ENCODE measurements at regions of chr2 and their contacts with region 1.

Region 1: DNA sequence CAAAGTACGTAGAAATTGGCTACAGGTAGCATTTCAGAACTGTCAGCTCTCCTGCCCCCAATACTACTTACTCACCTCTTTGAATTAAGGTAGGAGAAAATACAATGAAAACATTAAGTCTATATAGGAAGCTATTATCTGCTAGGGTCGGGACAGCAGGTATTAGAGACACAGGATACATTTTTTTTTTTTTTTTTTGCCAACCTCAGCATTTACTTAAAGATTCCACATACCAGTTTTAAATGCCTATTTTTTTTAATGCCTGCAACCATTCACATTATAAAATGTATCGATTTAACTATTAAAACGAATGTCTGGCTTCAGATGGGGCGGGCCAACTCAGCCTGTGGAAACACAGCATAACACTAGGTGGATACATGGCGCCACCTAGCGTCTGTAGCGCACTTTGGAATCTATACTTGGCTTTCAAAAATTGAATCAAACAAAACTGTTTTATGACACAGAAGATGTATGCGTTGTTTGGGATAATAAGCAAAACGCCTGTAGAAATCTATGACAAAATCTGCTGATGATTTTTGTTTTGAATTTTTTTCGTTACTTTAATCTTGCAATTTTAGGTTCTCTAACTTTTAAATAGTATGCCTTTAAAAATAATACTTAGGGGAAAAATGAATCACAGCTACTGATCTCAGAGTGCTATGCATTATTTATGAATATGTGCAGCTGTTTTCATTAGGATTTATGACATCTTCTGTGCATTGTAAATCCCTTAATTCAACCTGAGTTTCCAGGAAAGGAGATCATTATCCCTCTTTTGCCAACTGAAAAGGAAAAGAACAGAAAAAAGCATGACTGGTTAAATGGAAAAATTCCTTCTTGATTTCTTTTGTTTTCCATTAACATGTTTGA is 261.0 kb downstream of the NYAP2 start:
- DNase-seq: peak; percentile 37 to 71 (median 60)
- ATAC-seq: peak; percentile 83
- H3K4me3 ChIP-seq: no peak overlapping the region
- H3K4me3 Mint-ChIP-seq: no peak overlapping the region
- H3K27ac ChIP-seq: no peak overlapping the region
- H3K27ac Mint-ChIP-seq: no peak overlapping the region
- H3K4me1 ChIP-seq: no peaks in the 10 kb centered on the region
- H3K4me1 Mint-ChIP-seq: no peaks in the 10 kb centered on the region
- H3K27me3 ChIP-seq: peaks cover 0 to 2% of the 10 kb centered on the region in 2 donors
- H3K27me3 Mint-ChIP-seq: peaks cover 15 to 23% (median 20%) of the 10 kb centered on the region in 5 donors

Region 2: DNA sequence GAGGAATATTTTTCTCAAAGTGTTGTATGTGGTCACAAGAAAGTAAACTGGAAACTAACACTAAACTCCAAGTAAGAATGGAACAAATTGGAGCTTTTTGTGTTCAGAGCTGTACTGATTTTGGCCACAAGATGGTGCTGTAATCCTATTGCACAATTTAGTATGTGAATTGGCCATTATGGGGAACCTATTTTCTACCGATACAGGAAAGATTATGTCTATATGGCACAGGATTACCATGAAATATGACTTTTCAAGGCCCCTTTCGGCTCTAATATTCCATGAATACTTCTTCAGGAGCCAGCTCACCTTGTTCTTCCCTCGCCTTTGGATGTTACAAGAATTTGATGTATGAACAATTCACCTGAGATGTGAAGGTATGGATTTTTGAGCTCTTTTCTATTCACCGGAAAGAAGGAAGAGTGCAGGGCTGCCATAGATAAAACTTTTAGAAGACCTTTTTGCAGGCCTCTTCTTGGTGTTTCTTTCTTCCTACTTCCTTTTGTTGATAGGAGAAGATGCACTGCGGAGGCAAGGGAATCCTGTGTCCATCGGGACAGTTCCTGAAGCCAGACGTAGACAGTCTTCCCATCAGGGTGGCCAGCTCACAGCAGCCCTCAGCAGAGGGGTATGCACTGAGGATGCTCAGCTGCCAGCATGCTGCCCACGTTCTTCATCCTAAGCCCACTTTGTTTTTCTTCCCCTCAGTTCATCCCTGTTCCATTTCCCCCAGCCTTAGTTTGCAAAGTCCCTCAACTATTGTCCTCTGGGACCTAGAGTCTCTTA is 1690.0 kb before region 1 on chr2:
- CTCF ChIA-PET with region 1: no interaction called
- POLR2A ChIA-PET with region 1: no interaction called
- intact Hi-C with region 1: loop called in 1 of 2 experiments (anchors 10 kb)
- DNase-seq: peak in 8 of 9 donors; percentile 27 to 62 (median 54)
- ATAC-seq: peak; percentile 87
- H3K4me3 ChIP-seq: no peak overlapping the region
- H3K4me3 Mint-ChIP-seq: no peak overlapping the region
- H3K27ac ChIP-seq: no peak overlapping the region
- H3K27ac Mint-ChIP-seq: peak overlapping the region in 1 of 9 donors; percentile 28
- H3K4me1 ChIP-seq: no peaks in the 10 kb centered on the region
- H3K4me1 Mint-ChIP-seq: peaks cover 0 to 14% (median 4%) of the 10 kb centered on the region in 7 donors
- H3K27me3 ChIP-seq: no peaks in the 10 kb centered on the region
- H3K27me3 Mint-ChIP-seq: no peaks in the 10 kb centered on the region

Region 3: GRCh38 chr2:224778474-224778877 is 882.0 kb before region 1 on chr2:
- CTCF ChIA-PET with region 1: interaction called, 4 read pairs
- POLR2A ChIA-PET with region 1: no interaction called
- intact Hi-C with region 1: loop called in 1 of 2 experiments (anchors 2 kb)
- DNase-seq: peak; percentile 18 to 68 (median 58)
- ATAC-seq: peak; percentile 80
- H3K4me3 ChIP-seq: no peak overlapping the region
- H3K4me3 Mint-ChIP-seq: no peak overlapping the region
- H3K27ac ChIP-seq: no peak overlapping the region
- H3K27ac Mint-ChIP-seq: peak overlapping the region in 5 of 9 donors; percentile 10 to 54 (median 43)
- H3K4me1 ChIP-seq: no peaks in the 10 kb centered on the region
- H3K4me1 Mint-ChIP-seq: peaks cover 0 to 22% (median 11%) of the 10 kb centered on the region in 7 donors
- H3K27me3 ChIP-seq: no peaks in the 10 kb centered on the region
- H3K27me3 Mint-ChIP-seq: no peaks in the 10 kb centered on the region

Region 4: DNA sequence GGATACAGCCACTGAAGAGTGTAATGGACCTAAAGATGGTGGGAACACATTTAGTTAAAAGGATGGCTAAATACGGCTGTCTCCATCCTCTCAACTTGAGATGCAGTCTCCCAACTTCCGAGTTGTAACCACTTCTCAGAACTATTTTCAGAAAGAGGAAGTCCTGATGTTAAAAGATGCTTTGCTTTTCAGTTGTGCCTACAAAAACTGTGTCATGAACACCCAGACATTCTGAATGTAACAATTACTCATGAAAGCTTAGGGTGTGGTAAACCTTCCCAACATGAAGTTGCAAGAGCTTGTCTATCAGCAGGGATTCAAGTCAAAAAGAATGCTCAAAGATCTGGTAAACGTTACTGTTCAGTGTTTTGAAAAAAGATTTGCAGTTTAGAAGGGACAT is 766.1 kb before region 1 on chr2:
- CTCF ChIA-PET with region 1: no interaction called
- POLR2A ChIA-PET with region 1: no interaction called
- intact Hi-C with region 1: loop called in 1 of 2 experiments (anchors 10 kb)
- DNase-seq: peak in 4 of 9 donors; percentile 8 to 21 (median 10)
- ATAC-seq: peak; percentile 80
- H3K4me3 ChIP-seq: no peak overlapping the region
- H3K4me3 Mint-ChIP-seq: peak overlapping the region in 6 of 10 donors; percentile 8 to 75 (median 58)
- H3K27ac ChIP-seq: no peak overlapping the region
- H3K27ac Mint-ChIP-seq: peak overlapping the region; percentile 5 to 92 (median 69)
- H3K4me1 ChIP-seq: peaks cover 12 to 16% of the 10 kb centered on the region in 2 donors
- H3K4me1 Mint-ChIP-seq: peaks cover 35 to 76% (median 63%) of the 10 kb centered on the region in 7 donors
- H3K27me3 ChIP-seq: no peaks in the 10 kb centered on the region
- H3K27me3 Mint-ChIP-seq: no peaks in the 10 kb centered on the region

Region 5: GRCh38 chr2:225122583-225123486 is 537.7 kb before region 1 on chr2:
- CTCF ChIA-PET with region 1: no interaction called
- POLR2A ChIA-PET with region 1: no interaction called
- intact Hi-C with region 1: loop called (anchors 1 kb)
- DNase-seq: peak in 4 of 9 donors; percentile 15 to 28 (median 22)
- ATAC-seq: no peak
- H3K4me3 ChIP-seq: no peak overlapping the region
- H3K4me3 Mint-ChIP-seq: peak overlapping the region in 1 of 10 donors; percentile 48
- H3K27ac ChIP-seq: no peak overlapping the region
- H3K27ac Mint-ChIP-seq: peak overlapping the region in 4 of 9 donors; percentile 12 to 83 (median 44)
- H3K4me1 ChIP-seq: no peaks in the 10 kb centered on the region
- H3K4me1 Mint-ChIP-seq: peaks cover 0 to 13% (median 5%) of the 10 kb centered on the region in 7 donors
- H3K27me3 ChIP-seq: no peaks in the 10 kb centered on the region
- H3K27me3 Mint-ChIP-seq: peaks cover 0 to 14% (median 7%) of the 10 kb centered on the region in 5 donors

Region 6: GRCh38 chr2:226215902-226216503 is 555.5 kb after region 1 on chr2:
- CTCF ChIA-PET with region 1: no interaction called
- POLR2A ChIA-PET with region 1: no interaction called
- intact Hi-C with region 1: loop called in 1 of 2 experiments (anchors 10 kb)
- DNase-seq: peak; percentile 9 to 59 (median 37)
- ATAC-seq: peak; percentile 77
- H3K4me3 ChIP-seq: no peak overlapping the region
- H3K4me3 Mint-ChIP-seq: no peak overlapping the region
- H3K27ac ChIP-seq: no peak overlapping the region
- H3K27ac Mint-ChIP-seq: no peak overlapping the region
- H3K4me1 ChIP-seq: no peaks in the 10 kb centered on the region
- H3K4me1 Mint-ChIP-seq: peaks cover 0 to 2% (median 0%) of the 10 kb centered on the region in 7 donors
- H3K27me3 ChIP-seq: no peaks in the 10 kb centered on the region
- H3K27me3 Mint-ChIP-seq: peaks cover 3 to 12% (median 9%) of the 10 kb centered on the region in 5 donors